ENCODE measurements at regions of chr4 and their contacts with region 1.

Region 1: GRCh38 chr4:102620697-102621497 is 119.7 kb downstream of the NFKB1 start:
- H3K4me3 Mint-ChIP-seq: no peak overlapping the region
- H3K27ac Mint-ChIP-seq: no peak overlapping the region
- H3K4me1 Mint-ChIP-seq: peaks cover 9% of the 10 kb centered on the region
- H3K27me3 Mint-ChIP-seq: no peaks in the 10 kb centered on the region

Region 2: DNA sequence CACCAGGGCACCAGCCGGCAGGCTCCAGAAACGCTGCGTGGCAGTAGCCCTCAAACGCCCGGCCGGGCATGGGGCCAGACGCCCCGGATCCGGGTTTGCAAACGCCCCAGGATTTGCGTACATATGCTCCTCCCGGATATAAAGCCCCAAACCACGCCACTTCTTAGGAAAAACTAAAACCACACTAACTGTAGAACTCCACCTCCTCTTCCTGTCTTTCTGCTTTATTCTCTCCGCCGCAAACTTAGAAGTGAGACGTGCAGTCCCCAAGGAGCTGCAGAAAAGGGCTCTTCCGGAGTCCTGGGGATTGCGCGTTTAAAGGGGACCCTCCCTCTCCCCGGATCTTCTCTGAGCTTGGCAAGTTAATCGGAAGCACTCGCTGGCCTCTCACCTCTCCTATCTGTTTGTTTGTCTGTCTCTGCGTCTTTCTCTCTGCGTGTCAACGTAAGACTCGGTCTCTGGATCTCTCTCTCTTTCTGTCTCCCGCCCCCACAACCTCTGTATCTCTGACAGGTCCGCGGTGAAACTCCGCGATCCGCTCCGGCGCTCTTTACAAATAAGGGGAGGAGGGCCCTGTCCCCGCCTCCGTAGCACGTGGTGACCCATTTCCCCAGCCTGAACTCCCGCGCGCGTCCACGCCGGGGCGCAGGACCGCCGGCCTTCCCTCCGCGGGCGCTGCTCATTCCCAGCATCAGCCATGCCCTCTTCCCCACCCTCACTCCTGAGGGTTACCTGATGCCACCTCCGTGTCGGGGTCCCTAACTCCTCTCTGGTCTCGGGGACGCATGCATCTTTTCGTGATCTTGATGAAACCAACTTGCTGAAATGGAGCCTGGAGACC is 275.7 kb before region 1 on chr4 and contains the start of gene SLC39A8:
- intact Hi-C with region 1: loop called (anchors 10 kb)
- H3K4me3 Mint-ChIP-seq: peak within 1 kb of the TSS; percentile 93
- H3K27ac Mint-ChIP-seq: peak within 1 kb of the TSS; percentile 97
- H3K4me1 Mint-ChIP-seq: peaks cover 27% of the 10 kb centered on the region
- H3K27me3 Mint-ChIP-seq: no peaks in the 10 kb centered on the region

Region 3: GRCh38 chr4:102449751-102450352 is 171.0 kb before region 1 on chr4:
- intact Hi-C with region 1: loop called (anchors 1 kb)
- H3K4me3 Mint-ChIP-seq: no peak overlapping the region
- H3K27ac Mint-ChIP-seq: no peak overlapping the region
- H3K4me1 Mint-ChIP-seq: peaks cover 17% of the 10 kb centered on the region
- H3K27me3 Mint-ChIP-seq: no peaks in the 10 kb centered on the region

Region 4: GRCh38 chr4:102736636-102737549 is 116.0 kb after region 1 on chr4:
- intact Hi-C with region 1: no loop called
- H3K4me3 Mint-ChIP-seq: no peak overlapping the region
- H3K27ac Mint-ChIP-seq: peak overlapping the region; percentile 53
- H3K4me1 Mint-ChIP-seq: peaks cover 65% of the 10 kb centered on the region
- H3K27me3 Mint-ChIP-seq: no peaks in the 10 kb centered on the region

Region 5: DNA sequence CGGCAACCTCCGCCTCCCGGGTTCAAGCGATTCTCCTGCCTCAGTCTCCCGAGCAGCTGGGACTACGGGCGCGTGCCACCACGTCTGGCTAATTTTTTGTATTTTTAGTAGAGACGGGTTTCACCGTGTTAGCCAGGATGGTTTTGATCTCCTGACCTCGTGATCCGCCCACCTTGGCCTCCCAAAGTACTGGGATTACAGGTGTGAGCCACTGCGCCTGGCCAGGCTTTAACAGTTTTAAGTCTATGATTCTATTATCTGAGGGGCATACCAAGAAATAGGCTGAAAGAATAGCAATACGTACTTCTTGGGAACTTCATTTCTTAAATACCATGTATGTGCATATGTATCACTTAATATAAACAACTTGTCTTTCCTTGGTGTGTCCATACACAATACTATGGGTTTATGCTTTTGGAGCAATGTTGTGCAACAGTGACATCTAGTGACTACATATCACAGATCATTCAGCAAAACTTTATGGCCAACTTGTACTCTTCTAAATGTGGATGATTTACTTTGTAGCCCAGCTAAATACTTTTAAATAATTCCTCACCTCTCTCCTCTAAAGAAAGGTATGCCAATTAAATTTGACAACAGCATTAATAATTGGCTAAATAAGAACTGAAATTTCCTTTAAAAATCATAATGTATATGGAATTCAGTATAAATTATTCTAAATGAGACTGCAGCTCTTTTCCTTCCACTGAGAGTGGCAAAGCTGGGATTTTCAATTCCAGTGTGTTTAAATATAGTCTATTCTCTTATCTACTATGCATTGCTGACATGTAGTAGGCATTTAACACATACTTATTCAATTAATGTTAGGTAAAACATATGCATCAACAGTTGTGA is 388.2 kb after region 1 on chr4:
- intact Hi-C with region 1: loop called (anchors 5 kb)
- H3K4me3 Mint-ChIP-seq: no peak overlapping the region
- H3K27ac Mint-ChIP-seq: no peak overlapping the region
- H3K4me1 Mint-ChIP-seq: no peaks in the 10 kb centered on the region
- H3K27me3 Mint-ChIP-seq: no peaks in the 10 kb centered on the region

Region 6: GRCh38 chr4:103099691-103100392 is 478.9 kb after region 1 on chr4 and contains the start of gene BDH2:
- intact Hi-C with region 1: loop called (anchors 10 kb)
- H3K4me3 Mint-ChIP-seq: peak within 1 kb of the TSS; percentile 71
- H3K27ac Mint-ChIP-seq: peak within 1 kb of the TSS; percentile 78
- H3K4me1 Mint-ChIP-seq: peaks cover 6% of the 10 kb centered on the region
- H3K27me3 Mint-ChIP-seq: no peaks in the 10 kb centered on the region